Mammary epithelial cell (primary cell): ENCODE measurements at regions of chr2 and their contacts with region 1.

Region 1: GRCh38 chr2:152036611-152037469 is 62.0 kb downstream of the CACNB4 start:
- DNase-seq: peak; percentile 46
- H3K4me3 ChIP-seq: no peak overlapping the region
- H3K27ac ChIP-seq: no peak overlapping the region
- H3K4me1 ChIP-seq: no peaks in the 10 kb centered on the region
- H3K27me3 ChIP-seq: peaks cover 3% of the 10 kb centered on the region
- CTCF ChIP-seq: peak; percentile 85 to 89

Region 2: DNA sequence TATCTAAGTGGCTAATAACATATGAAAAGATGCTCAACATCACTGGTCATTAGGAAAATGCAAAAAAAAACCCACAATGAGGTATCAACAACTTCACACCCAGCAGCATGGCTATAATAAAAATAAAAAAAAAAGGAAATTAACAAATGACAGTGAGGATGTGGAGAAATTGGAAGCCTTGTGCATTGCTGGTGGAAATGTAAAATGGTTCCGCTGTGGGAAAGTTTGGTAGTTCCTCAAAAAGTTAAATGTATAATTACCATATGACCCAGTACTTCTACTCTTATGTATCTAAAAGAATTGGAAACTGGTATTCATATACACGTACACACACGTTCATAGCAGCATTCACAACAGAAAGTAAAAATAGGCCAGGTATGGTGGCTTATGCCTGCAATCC is 77.5 kb after region 1 on chr2:
- CTCF ChIA-PET with region 1: no interaction called
- dilution Hi-C with region 1: no loop called
- in situ Hi-C with region 1: no loop called
- intact Hi-C with region 1: loop called (anchors 5 kb)
- DNase-seq: no peak
- H3K4me3 ChIP-seq: no peak overlapping the region
- H3K27ac ChIP-seq: no peak overlapping the region
- H3K4me1 ChIP-seq: no peaks in the 10 kb centered on the region
- H3K27me3 ChIP-seq: no peaks in the 10 kb centered on the region
- CTCF ChIP-seq: no peak

Region 3: GRCh38 chr2:152627351-152627957 is 590.6 kb after region 1 on chr2:
- CTCF ChIA-PET with region 1: no interaction called
- dilution Hi-C with region 1: no loop called
- in situ Hi-C with region 1: loop called (anchors 25 kb)
- intact Hi-C with region 1: loop called (anchors 1 kb)
- DNase-seq: peak; percentile 12
- H3K4me3 ChIP-seq: no peak overlapping the region
- H3K27ac ChIP-seq: no peak overlapping the region
- H3K4me1 ChIP-seq: no peaks in the 10 kb centered on the region
- H3K27me3 ChIP-seq: no peaks in the 10 kb centered on the region
- CTCF ChIP-seq: peak; percentile 44 to 53

Region 4: DNA sequence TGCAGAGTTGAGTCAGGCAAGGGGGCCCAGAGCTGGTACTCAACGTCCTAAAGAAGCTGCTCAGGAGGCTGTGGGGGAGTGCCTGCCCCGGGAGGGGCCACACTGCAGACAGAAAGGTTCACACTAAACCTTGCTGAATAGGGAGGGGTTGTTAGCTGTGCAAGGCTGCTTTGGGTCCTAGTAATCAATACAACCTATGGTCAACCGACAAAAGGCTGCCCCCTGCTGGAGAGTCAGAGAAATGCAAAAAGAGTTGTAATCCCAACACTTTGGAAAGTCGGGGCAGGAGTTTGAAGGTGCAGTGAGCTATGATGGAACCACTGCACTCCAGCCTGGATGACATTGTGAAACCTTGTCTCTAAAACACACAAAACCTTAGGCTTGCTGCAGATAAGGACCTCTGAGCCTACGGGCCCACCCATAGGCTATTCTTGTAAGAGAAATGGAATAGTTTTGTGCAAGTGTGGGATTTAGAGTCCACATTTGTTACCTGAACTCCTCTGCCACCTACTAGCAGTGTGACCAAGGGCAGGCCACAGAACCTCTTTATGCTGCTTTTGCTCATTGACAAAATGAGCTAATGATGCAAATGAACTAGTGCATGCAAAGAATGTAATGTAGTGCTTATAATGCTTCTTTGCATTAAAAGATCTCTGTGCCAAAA is 598.9 kb after region 1 on chr2:
- CTCF ChIA-PET with region 1: no interaction called
- dilution Hi-C with region 1: no loop called
- in situ Hi-C with region 1: loop called (anchors 25 kb)
- intact Hi-C with region 1: loop called (anchors 2 kb)
- DNase-seq: peak; percentile 42
- H3K4me3 ChIP-seq: no peak overlapping the region
- H3K27ac ChIP-seq: no peak overlapping the region
- H3K4me1 ChIP-seq: no peaks in the 10 kb centered on the region
- H3K27me3 ChIP-seq: no peaks in the 10 kb centered on the region
- CTCF ChIP-seq: peak; percentile 70 to 78

Region 5: GRCh38 chr2:152740743-152741328 is 704.0 kb after region 1 on chr2:
- CTCF ChIA-PET with region 1: no interaction called
- dilution Hi-C with region 1: no loop called
- in situ Hi-C with region 1: no loop called
- intact Hi-C with region 1: loop called (anchors 2 kb)
- DNase-seq: peak; percentile 43
- H3K4me3 ChIP-seq: no peak overlapping the region
- H3K27ac ChIP-seq: no peak overlapping the region
- H3K4me1 ChIP-seq: no peaks in the 10 kb centered on the region
- H3K27me3 ChIP-seq: no peaks in the 10 kb centered on the region
- CTCF ChIP-seq: peak; percentile 82 to 90